ENCODE measurements at regions of chr9 and their contacts with region 1.

Region 1: DNA sequence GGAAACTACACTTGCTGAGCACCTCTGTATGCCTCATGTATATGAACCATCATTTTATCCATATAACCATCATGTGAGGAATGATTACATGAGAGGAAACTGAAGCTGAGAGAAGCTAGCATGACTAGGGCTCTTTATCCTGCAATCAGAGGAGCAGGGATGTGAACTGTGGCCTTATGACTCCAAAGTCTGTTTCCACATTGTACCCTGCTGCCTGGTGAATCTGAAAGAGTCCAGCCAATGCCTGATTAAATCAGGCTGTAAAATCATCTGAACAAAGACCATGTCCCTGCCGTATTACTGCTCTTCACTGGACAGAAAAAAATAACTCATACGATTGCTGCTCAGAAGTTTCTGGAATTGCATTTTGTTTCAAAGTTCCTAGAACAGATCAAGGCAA is 67.0 kb downstream of the LPAR1 start:
- DNase-seq: no peak
- ATAC-seq: no peak
- H3K4me3 ChIP-seq: no peak overlapping the region
- H3K27ac ChIP-seq: no peak overlapping the region
- H3K4me1 ChIP-seq: no peaks in the 10 kb centered on the region
- H3K27me3 ChIP-seq: no peaks in the 10 kb centered on the region
- CTCF ChIP-seq: no peak
- EP300 ChIP-seq: no peak
- POLR2A ChIP-seq: no peak
- RAD21 ChIP-seq: no peak

Region 2: DNA sequence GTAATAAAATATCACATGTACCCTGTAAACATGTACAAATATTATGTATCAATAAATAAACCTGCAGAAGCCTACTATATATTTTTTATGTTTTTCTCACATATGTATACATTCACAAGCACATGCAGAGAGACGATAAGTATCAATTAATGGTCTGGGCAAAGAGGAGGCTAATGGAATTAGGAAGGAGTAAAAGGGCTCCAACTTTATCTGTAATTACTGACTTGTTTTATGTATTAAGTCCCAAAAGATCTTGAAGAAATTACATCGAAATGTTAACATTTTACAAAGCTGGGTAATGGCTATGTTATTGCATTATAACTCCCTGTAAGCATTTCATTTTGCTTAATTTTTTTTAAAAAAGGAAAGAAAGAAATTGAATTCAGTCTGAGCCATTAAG is 10.9 kb before region 1 on chr9:
- CTCF ChIA-PET with region 1: interaction called, 6 read pairs
- POLR2A ChIA-PET with region 1: interaction called, 3 read pairs
- RAD21 ChIA-PET with region 1: interaction called, 5 read pairs
- SMC1A ChIA-PET with region 1: interaction called, 12 read pairs
- in situ Hi-C with region 1: no loop called
- intact Hi-C with region 1: no loop called
- DNase-seq: no peak
- ATAC-seq: no peak
- H3K4me3 ChIP-seq: no peak overlapping the region
- H3K27ac ChIP-seq: no peak overlapping the region
- H3K4me1 ChIP-seq: no peaks in the 10 kb centered on the region
- H3K27me3 ChIP-seq: no peaks in the 10 kb centered on the region
- CTCF ChIP-seq: no peak
- EP300 ChIP-seq: no peak
- POLR2A ChIP-seq: no peak
- RAD21 ChIP-seq: no peak

Region 3: GRCh38 chr9:111253742-111254437 is 282.7 kb after region 1 on chr9:
- CTCF ChIA-PET with region 1: no interaction called
- POLR2A ChIA-PET with region 1: no interaction called
- RAD21 ChIA-PET with region 1: no interaction called
- SMC1A ChIA-PET with region 1: no interaction called
- in situ Hi-C with region 1: no loop called
- intact Hi-C with region 1: no loop called
- DNase-seq: no peak
- ATAC-seq: no peak
- H3K4me3 ChIP-seq: no peak overlapping the region
- H3K27ac ChIP-seq: no peak overlapping the region
- H3K4me1 ChIP-seq: no peaks in the 10 kb centered on the region
- H3K27me3 ChIP-seq: no peaks in the 10 kb centered on the region
- CTCF ChIP-seq: no peak
- EP300 ChIP-seq: no peak
- POLR2A ChIP-seq: no peak
- RAD21 ChIP-seq: no peak

Region 4: GRCh38 chr9:111926421-111926875 is 955.2 kb after region 1 on chr9:
- CTCF ChIA-PET with region 1: no interaction called
- POLR2A ChIA-PET with region 1: no interaction called
- RAD21 ChIA-PET with region 1: no interaction called
- SMC1A ChIA-PET with region 1: no interaction called
- in situ Hi-C with region 1: no loop called
- intact Hi-C with region 1: no loop called
- DNase-seq: peak; percentile 86
- ATAC-seq: peak; percentile 98
- H3K4me3 ChIP-seq: no peak overlapping the region
- H3K27ac ChIP-seq: peak overlapping the region; percentile 75
- H3K4me1 ChIP-seq: peaks cover 13% of the 10 kb centered on the region; the same call in 1 of the 2 replicates
- H3K27me3 ChIP-seq: no peaks in the 10 kb centered on the region
- CTCF ChIP-seq: no peak
- EP300 ChIP-seq: peak; percentile 73 to 76; a peak in 3 of 4 replicates
- POLR2A ChIP-seq: no peak
- RAD21 ChIP-seq: no peak

Measured in GM12878 (cell line).